GM12878 (cell line): ENCODE measurements at regions of chr6 and their contacts with region 1.

Region 1: DNA sequence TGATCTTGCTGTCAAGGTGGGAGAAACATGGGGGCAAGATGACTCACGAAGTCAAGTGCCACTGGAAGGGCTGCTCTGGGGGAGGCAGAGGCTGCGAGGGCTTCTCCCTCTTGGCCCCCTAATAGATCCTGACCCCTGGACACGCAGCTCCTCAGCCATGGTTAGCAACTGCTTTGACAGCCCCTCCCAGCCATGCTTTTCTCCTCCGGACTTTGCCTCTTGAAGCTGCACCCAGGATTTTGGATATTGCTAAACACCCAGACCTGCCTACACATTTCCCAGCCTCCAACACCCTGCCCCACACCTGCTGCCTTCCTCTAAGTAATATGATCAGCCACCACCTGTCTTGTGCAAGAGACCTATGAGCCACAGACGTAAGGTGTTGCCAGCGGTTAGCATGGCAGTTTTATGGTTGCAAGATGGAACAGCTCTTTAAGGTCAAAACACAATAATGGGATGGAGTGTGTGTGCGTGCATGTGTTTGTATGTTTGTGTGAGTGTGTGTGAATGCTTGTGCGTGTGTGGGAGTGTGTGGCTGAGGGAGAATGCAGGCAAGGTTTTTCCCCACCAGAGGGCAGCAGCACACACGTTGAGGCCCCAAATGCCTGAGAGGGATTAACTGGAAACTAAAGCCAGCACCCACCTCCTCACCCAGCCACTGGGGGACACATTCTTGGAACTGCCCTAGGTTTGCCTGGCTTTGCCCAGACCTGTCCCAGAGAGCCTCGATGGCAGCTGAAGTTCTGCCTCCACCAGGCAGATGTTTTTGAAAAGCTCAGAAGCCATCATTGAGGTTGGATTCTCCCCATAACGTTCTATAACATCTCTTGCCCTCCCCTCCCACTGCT is 2.5 kb downstream of the IP6K3 start:
- DNase-seq: no peak
- ATAC-seq: peak; percentile 94
- H3K4me3 ChIP-seq: no peak overlapping the region
- H3K27ac ChIP-seq: no peak overlapping the region
- H3K4me1 ChIP-seq: no peaks in the 10 kb centered on the region
- H3K27me3 ChIP-seq: no peaks in the 10 kb centered on the region; a peak in 2 of 4 replicates
- CTCF ChIP-seq: peak; percentile 90 to 97 (median 91)
- EP300 ChIP-seq: no peak
- POLR2A ChIP-seq: no peak
- RAD21 ChIP-seq: peak; percentile 62

Region 2: GRCh38 chr6:33654831-33655554 is 89.2 kb before region 1 on chr6:
- CTCF ChIA-PET with region 1: no interaction called
- POLR2A ChIA-PET with region 1: no interaction called
- RAD21 ChIA-PET with region 1: no interaction called
- SMC1A ChIA-PET with region 1: no interaction called
- in situ Hi-C with region 1: no loop called
- intact Hi-C with region 1: no loop called
- DNase-seq: no peak
- ATAC-seq: no peak
- H3K4me3 ChIP-seq: no peak overlapping the region
- H3K27ac ChIP-seq: no peak overlapping the region
- H3K4me1 ChIP-seq: no peaks in the 10 kb centered on the region
- H3K27me3 ChIP-seq: no peaks in the 10 kb centered on the region
- CTCF ChIP-seq: no peak
- EP300 ChIP-seq: no peak
- POLR2A ChIP-seq: no peak
- RAD21 ChIP-seq: no peak

Region 3: GRCh38 chr6:33711140-33712129 is 32.8 kb before region 1 on chr6 and contains the start of gene UQCC2:
- CTCF ChIA-PET with region 1: interaction called, 46 read pairs
- POLR2A ChIA-PET with region 1: no interaction called
- RAD21 ChIA-PET with region 1: interaction called, 8 read pairs
- SMC1A ChIA-PET with region 1: interaction called, 4 read pairs
- in situ Hi-C with region 1: no loop called
- intact Hi-C with region 1: no loop called
- DNase-seq: peak; percentile 84
- ATAC-seq: peak; percentile 97
- H3K4me3 ChIP-seq: peak within 1 kb of the TSS; percentile 83
- H3K27ac ChIP-seq: peak within 1 kb of the TSS; percentile 98
- H3K4me1 ChIP-seq: peaks cover 28% of the 10 kb centered on the region
- H3K27me3 ChIP-seq: no peaks in the 10 kb centered on the region
- CTCF ChIP-seq: peak; percentile 66 to 87 (median 68)
- EP300 ChIP-seq: no peak
- POLR2A ChIP-seq: peak; percentile 93
- RAD21 ChIP-seq: peak; percentile 64
- polyA plus RNA-seq, gene UQCC2: 433 to 478 TPM

Region 4: GRCh38 chr6:33723371-33724085 is 20.7 kb before region 1 on chr6:
- CTCF ChIA-PET with region 1: interaction called, 12 read pairs
- POLR2A ChIA-PET with region 1: interaction called, 6 read pairs
- RAD21 ChIA-PET with region 1: no interaction called
- SMC1A ChIA-PET with region 1: no interaction called
- in situ Hi-C with region 1: no loop called
- intact Hi-C with region 1: no loop called
- DNase-seq: no peak
- ATAC-seq: no peak
- H3K4me3 ChIP-seq: no peak overlapping the region
- H3K27ac ChIP-seq: no peak overlapping the region
- H3K4me1 ChIP-seq: peaks cover 12% of the 10 kb centered on the region
- H3K27me3 ChIP-seq: peaks cover 6 to 11% of the 10 kb centered on the region in 2 experiments; a peak in 2 of 4 replicates
- CTCF ChIP-seq: no peak
- EP300 ChIP-seq: no peak
- POLR2A ChIP-seq: no peak
- RAD21 ChIP-seq: no peak

Region 5: GRCh38 chr6:33771146-33772081 is 27.2 kb after region 1 on chr6:
- CTCF ChIA-PET with region 1: interaction called, 12 read pairs
- POLR2A ChIA-PET with region 1: no interaction called
- RAD21 ChIA-PET with region 1: no interaction called
- SMC1A ChIA-PET with region 1: no interaction called
- in situ Hi-C with region 1: no loop called
- intact Hi-C with region 1: no loop called
- DNase-seq: no peak
- ATAC-seq: peak; percentile 89
- H3K4me3 ChIP-seq: no peak overlapping the region
- H3K27ac ChIP-seq: no peak overlapping the region
- H3K4me1 ChIP-seq: no peaks in the 10 kb centered on the region; the same call in 1 of the 2 replicates
- H3K27me3 ChIP-seq: no peaks in the 10 kb centered on the region; a peak in 1 of 4 replicates
- CTCF ChIP-seq: peak; percentile 78 to 90 (median 81)
- EP300 ChIP-seq: no peak
- POLR2A ChIP-seq: 0 out of 2 replicates have a peak, but pooled peaks have one; percentile 25
- RAD21 ChIP-seq: peak; percentile 64

Region 6: DNA sequence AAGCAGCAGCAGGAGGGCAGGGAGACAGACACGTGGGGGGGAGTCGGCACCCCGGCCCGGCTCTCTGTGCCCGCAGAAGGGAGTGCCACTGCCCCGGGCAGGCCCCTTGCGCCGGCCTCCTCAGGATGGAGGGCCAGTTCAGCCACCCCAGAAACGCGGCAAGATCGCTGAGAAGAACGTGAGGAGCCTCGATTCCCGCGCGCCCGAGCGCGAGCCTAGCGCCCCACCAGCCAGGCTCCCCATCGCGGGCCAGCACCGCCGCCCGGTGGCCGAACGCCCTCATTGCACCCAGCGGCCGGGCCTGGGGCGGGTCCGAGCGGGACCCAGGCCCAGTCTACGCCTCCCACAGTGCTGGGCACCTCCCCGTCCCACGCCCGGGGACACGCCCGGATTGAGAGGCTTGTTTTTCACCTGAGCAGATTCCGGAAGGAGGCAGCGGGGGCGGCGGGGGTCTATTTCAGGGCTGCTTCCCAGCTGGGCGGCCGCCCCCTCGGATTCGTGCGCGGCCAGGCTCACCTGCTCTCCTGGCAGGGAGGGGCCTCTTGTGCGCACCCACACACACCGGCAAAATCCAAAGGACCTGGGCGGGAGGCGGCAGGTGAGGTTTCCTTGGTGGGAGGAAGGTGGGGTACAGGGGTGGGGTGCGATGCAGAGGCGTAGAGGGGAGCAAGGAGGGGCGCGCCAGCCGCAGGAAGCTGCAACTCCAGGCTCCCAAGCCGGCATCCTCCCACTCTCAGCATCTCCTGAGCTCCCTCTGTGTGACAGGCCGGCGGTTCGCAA is 410.6 kb after region 1 on chr6:
- CTCF ChIA-PET with region 1: interaction called, 3 read pairs
- POLR2A ChIA-PET with region 1: no interaction called
- RAD21 ChIA-PET with region 1: no interaction called
- SMC1A ChIA-PET with region 1: no interaction called
- in situ Hi-C with region 1: no loop called
- intact Hi-C with region 1: loop called (anchors 1 kb)
- DNase-seq: no peak
- ATAC-seq: peak; percentile 94
- H3K4me3 ChIP-seq: no peak overlapping the region; the same call in 1 of the 2 replicates
- H3K27ac ChIP-seq: no peak overlapping the region
- H3K4me1 ChIP-seq: peaks cover 10% of the 10 kb centered on the region
- H3K27me3 ChIP-seq: peaks cover 3% of the 10 kb centered on the region in 2 experiments; a peak in 3 of 4 replicates
- CTCF ChIP-seq: peak; percentile 91 to 96 (median 96)
- EP300 ChIP-seq: no peak
- POLR2A ChIP-seq: no peak
- RAD21 ChIP-seq: peak; percentile 97